ENCODE measurements at regions of chr17 and their contacts with region 1.

Region 1: DNA sequence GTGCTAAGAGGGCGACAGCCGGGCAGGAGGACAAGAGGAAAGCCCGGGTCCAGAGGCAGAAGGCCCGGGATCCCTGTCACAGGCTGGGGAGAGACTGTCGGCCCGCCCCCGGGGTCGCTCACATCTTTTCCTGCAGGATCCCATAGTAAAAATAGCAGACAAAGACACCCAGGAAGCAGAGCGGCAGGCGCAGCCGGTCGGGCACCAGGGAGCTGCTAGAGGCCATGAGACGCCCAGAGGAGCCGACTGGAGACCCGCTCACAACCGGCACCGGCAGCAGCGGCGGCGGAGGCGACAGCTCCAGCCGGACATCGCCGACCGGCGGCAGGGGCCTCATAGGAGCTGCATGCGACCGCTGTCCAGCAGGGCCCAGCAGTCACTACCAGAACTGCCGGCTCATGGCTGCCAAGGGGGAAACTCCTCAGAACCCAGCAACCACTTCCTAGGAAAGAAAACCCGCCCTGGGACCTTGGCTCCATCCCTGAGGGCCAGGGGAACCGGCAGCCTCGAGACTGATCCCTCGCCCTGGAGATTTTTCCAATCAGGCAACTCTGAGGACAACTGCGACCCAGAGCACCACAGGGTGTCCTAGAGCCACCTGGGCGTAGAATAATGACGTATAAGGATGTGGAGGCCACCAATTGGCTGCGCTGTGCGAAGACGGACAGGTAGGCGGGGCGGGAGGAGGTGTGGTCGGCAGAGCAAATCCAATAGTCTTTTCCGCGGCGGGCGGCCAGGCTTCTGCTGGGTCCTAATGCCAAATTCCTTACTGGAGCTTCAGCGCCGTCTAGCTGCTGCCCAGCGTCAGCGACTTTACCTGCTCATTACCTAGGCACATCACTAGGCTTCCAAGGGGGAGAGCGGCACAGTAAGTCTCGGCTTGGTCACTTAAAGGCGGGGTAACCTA is at the start of gene SLC35B1:
- DNase-seq: peak; percentile 97 to 99 (median 98)
- H3K4me3 ChIP-seq: peak within 1 kb of the TSS; percentile 86
- H3K4me3 Mint-ChIP-seq: peak within 1 kb of the TSS; percentile 83 to 95 (median 92)
- H3K27ac ChIP-seq: peak within 1 kb of the TSS; percentile 96
- H3K27ac Mint-ChIP-seq: peak within 1 kb of the TSS; percentile 88 to 99 (median 98)
- H3K4me1 ChIP-seq: peaks cover 26% of the 10 kb centered on the region
- H3K4me1 Mint-ChIP-seq: peaks cover 42 to 58% (median 54%) of the 10 kb centered on the region in 3 donors
- H3K27me3 ChIP-seq: no peaks in the 10 kb centered on the region
- H3K27me3 Mint-ChIP-seq: peaks cover 0 to 2% of the 10 kb centered on the region in 2 donors
- total RNA-seq, gene SLC35B1: 82.8 to 88.9 TPM

Region 2: DNA sequence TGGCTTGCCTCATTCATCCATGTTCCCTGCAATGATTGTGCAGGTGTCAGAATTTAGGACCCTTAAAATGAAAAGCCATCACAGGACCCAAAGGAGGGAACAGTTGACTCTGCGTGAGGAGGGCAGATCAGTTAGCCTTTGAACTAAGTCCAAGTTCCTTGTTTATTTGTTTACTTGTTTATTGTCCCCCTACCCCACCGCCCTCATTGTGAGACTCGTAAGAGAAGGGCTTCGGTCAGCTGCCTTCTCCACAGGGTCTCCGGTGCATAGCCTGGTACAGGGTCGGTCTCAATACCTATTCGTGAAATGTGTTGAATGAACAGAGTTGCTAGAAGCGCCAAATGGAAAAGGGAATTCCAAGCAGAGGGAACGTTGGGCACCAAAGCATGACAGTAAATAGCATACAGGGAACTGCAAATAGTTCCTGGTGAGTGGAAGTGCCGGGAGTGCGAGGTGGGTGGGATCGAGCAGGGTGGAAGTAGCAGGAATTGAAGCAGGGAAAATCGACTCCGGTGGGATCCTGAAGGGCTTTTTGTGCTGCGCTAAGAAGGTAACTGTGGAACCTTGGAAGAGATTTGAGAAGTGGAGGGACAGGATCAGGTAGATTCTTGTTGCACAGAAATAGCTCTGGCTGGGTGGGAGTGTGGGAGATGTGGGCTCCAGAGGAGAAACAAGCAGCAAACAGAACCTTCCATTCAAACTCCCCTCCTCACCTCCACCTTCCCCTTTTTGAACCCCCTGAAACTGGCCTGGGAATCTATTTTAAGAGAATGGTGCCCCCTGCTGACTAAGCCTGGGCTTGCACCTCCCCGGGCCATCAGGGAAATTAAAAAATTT is 12.8 kb before region 1 on chr17:
- CTCF ChIA-PET with region 1: interaction called, 12 read pairs
- POLR2A ChIA-PET with region 1: interaction called, 4 read pairs
- DNase-seq: peak; percentile 50 to 78 (median 65)
- H3K4me3 ChIP-seq: no peak overlapping the region
- H3K4me3 Mint-ChIP-seq: peak overlapping the region in 6 of 7 donors; percentile 15 to 79 (median 50)
- H3K27ac ChIP-seq: no peak overlapping the region
- H3K27ac Mint-ChIP-seq: peak overlapping the region; percentile 79 to 96 (median 90)
- H3K4me1 ChIP-seq: peaks cover 24% of the 10 kb centered on the region
- H3K4me1 Mint-ChIP-seq: peaks cover 34 to 44% (median 34%) of the 10 kb centered on the region in 3 donors
- H3K27me3 ChIP-seq: no peaks in the 10 kb centered on the region
- H3K27me3 Mint-ChIP-seq: no peaks in the 10 kb centered on the region

Region 3: GRCh38 chr17:49748791-49749190 is 40.9 kb after region 1 on chr17:
- CTCF ChIA-PET with region 1: interaction called, 23 read pairs
- POLR2A ChIA-PET with region 1: interaction called, 8 read pairs
- DNase-seq: peak; percentile 49 to 80 (median 60)
- H3K4me3 ChIP-seq: peak overlapping the region; percentile 26
- H3K4me3 Mint-ChIP-seq: peak overlapping the region; percentile 73 to 83 (median 82)
- H3K27ac ChIP-seq: peak overlapping the region; percentile 52
- H3K27ac Mint-ChIP-seq: peak overlapping the region; percentile 94 to 99 (median 97)
- H3K4me1 ChIP-seq: peaks cover 90% of the 10 kb centered on the region
- H3K4me1 Mint-ChIP-seq: peaks cover 80 to 93% (median 92%) of the 10 kb centered on the region in 3 donors
- H3K27me3 ChIP-seq: no peaks in the 10 kb centered on the region
- H3K27me3 Mint-ChIP-seq: no peaks in the 10 kb centered on the region

Region 4: DNA sequence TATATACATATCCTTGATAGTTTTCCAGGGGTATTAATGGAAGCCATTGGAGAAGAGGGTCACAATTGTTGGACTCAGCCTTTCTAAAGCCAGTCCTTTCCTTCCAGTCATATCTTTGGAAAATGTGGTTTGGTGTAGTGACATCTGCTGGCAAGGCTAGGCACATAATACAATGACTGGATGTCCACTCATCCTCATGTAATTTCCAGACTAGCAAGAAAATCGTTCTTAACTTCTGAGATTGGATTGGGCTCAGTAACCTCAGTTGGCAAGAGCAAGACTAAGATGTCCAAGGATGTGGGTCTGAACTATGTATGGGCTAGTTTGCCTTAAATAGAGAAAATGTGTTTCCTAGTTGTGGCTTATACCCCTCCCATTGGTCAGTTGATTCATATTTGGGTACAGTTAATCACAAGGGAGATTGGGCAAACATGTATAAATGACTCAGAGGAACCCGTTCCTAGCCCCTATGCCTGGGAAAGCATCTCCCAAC is 71.9 kb after region 1 on chr17:
- CTCF ChIA-PET with region 1: interaction called, 10 read pairs
- POLR2A ChIA-PET with region 1: interaction called, 4 read pairs
- DNase-seq: peak in 1 of 5 donors; percentile 13
- H3K4me3 ChIP-seq: no peak overlapping the region
- H3K4me3 Mint-ChIP-seq: no peak overlapping the region
- H3K27ac ChIP-seq: no peak overlapping the region
- H3K27ac Mint-ChIP-seq: peak overlapping the region in 1 of 8 donors; percentile 43
- H3K4me1 ChIP-seq: no peaks in the 10 kb centered on the region
- H3K4me1 Mint-ChIP-seq: peaks cover 7 to 9% (median 8%) of the 10 kb centered on the region in 3 donors
- H3K27me3 ChIP-seq: no peaks in the 10 kb centered on the region
- H3K27me3 Mint-ChIP-seq: peaks cover 0 to 4% of the 10 kb centered on the region in 2 donors

Region 5: DNA sequence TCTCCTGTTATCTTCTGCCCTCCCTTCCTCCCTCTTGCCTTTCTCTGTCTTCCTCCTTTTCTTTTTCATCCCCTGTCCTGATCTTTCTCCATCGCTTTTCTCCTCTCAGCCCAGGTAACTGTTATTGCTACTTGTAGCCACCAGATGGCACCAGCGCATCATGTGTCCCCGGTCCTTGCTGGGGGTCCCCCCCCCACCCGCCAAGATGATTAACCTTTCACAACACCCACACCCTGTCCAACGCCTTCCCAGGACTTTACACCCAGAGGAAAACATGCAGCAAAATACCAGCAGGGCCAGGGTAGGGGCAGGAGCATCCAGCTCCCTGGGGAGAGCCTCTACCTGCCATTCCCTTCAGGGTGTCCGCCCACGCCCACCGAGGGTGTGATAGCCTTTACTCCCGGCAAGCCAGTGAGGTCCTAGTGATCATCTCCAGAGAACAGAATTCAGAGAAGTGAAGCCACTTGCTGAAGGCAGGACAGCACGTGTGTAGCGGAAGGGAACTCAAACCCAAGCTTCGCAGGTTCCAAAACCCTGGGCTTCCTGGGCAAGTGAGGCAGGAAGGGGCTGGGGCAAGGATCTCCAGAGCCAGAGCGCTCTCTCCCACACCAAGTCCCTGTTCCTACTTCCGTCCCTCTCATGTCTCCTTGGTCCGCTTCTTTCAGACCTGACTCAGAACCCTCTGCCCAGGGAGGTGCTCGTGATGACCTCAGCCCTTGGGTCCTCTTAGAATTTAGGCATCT is 153.5 kb after region 1 on chr17:
- CTCF ChIA-PET with region 1: no interaction called
- POLR2A ChIA-PET with region 1: no interaction called
- DNase-seq: peak; percentile 32 to 57 (median 44)
- H3K4me3 ChIP-seq: no peak overlapping the region
- H3K4me3 Mint-ChIP-seq: no peak overlapping the region
- H3K27ac ChIP-seq: no peak overlapping the region
- H3K27ac Mint-ChIP-seq: peak overlapping the region in 1 of 8 donors; percentile 2
- H3K4me1 ChIP-seq: peaks cover 5% of the 10 kb centered on the region
- H3K4me1 Mint-ChIP-seq: peaks cover 3 to 5% (median 4%) of the 10 kb centered on the region in 3 donors
- H3K27me3 ChIP-seq: no peaks in the 10 kb centered on the region
- H3K27me3 Mint-ChIP-seq: peaks cover 9 to 13% of the 10 kb centered on the region in 2 donors